Caco-2 (cell line): ENCODE measurements at regions of chr12 and their contacts with region 1.

Region 1: GRCh38 chr12:6944381-6945186 is 762 bp downstream of the C12orf57 start:
- DNase-seq: peak; percentile 97
- H3K4me3 ChIP-seq: peak overlapping the region; percentile 59
- H3K4me3 Mint-ChIP-seq: peak overlapping the region; percentile 88
- H3K27ac Mint-ChIP-seq: peak overlapping the region; percentile 99
- H3K4me1 ChIP-seq: peaks cover 18% of the 10 kb centered on the region
- H3K4me1 Mint-ChIP-seq: peaks cover 40% of the 10 kb centered on the region
- H3K27me3 ChIP-seq: no peaks in the 10 kb centered on the region
- H3K27me3 Mint-ChIP-seq: peaks cover 4% of the 10 kb centered on the region
- CTCF ChIP-seq: peak; percentile 93 to 96

Region 2: DNA sequence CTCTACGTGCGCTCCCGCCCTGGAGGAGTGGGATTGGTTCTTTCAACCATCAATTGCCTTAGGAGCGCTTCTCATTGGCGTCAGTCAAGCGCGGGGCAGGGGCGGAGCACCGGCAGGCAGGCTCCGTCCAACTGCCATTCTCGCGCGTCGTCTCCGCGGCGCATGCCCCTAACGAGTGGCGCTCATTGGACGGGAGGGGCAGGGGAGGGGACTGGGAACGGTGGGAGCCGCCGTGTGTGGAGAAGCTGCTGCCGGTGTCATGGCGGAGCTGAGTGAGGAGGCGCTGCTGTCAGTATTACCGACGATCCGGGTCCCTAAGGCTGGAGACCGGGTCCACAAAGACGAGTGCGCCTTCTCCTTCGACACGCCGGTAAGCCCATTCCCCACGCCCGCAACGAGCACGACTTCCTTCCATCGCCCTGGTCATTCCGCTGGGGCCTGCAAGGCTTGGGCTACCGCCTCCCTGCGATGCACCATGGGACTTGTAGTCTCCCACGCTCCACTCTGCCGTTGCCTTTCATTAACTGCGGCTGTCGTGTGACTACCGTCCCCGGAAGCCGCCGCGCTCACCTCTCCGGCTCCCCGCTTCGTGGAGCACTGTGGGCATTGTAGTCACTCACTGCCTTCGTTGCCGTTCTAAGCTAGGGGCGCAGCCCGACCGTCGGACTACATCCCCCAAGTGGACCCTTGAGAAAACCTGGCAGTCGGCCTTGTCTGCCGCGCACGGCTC is 92.5 kb before region 1 on chr12 and contains the start of gene USP5:
- CTCF ChIA-PET with region 1: interaction called, 11 read pairs
- POLR2A ChIA-PET with region 1: interaction called, 32 read pairs
- intact Hi-C with region 1: no loop called
- DNase-seq: peak; percentile 100
- H3K4me3 ChIP-seq: peak within 1 kb of the TSS; percentile 69
- H3K4me3 Mint-ChIP-seq: peak within 1 kb of the TSS; percentile 94
- H3K27ac Mint-ChIP-seq: peak within 1 kb of the TSS; percentile 95
- H3K4me1 ChIP-seq: peaks cover 13% of the 10 kb centered on the region
- H3K4me1 Mint-ChIP-seq: peaks cover 19% of the 10 kb centered on the region
- H3K27me3 ChIP-seq: no peaks in the 10 kb centered on the region
- H3K27me3 Mint-ChIP-seq: no peaks in the 10 kb centered on the region
- CTCF ChIP-seq: no peak
- total RNA-seq, gene USP5: 226 and 230 TPM in 2 replicates

Region 3: DNA sequence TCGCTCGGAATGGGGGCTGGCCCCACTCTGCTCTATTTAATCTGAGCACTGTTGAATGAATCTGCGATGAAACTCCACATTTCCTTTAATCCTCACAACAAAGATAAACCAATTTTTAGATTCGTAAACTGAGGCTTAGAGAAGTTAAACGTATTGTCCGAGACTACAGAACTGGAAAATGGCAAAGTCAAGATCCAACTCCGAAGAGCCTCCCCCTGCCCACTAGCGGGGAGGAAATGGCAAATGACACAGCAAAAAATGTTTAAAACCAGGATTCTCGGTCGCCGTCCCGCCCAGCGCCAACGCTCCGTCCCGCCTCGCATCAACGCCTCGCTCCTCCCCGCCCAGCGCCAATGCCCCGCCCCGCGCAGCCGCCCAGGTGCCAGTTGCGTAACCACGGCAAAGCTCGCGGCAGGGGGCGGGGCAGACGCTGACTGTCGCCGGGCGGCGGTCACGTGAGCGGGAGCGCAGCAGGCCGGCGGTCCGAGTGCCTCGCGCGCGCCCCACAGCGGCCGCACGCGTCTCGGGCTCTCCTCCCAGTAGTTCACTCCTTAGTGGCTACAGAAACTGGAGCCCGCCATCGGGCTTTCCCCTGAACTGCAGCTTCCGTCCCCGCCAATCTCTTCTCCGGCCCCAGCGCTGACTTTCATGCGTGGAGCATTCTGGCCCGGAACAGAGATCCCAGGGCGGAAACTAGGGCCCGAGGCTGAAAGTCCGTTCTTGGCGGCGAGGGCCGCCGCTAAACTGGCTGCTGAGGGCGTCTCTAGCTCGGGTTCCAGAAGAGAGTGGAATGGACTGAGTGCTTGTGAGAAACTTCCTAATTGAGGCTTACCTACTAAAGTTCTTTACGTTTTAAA is 53.6 kb before region 1 on chr12:
- CTCF ChIA-PET with region 1: interaction called, 13 read pairs
- POLR2A ChIA-PET with region 1: interaction called, 20 read pairs
- intact Hi-C with region 1: no loop called
- DNase-seq: peak; percentile 98 to 100
- H3K4me3 ChIP-seq: peak overlapping the region; percentile 34
- H3K4me3 Mint-ChIP-seq: peak overlapping the region; percentile 80
- H3K27ac Mint-ChIP-seq: peak overlapping the region; percentile 96
- H3K4me1 ChIP-seq: peaks cover 37% of the 10 kb centered on the region
- H3K4me1 Mint-ChIP-seq: peaks cover 5% of the 10 kb centered on the region
- H3K27me3 ChIP-seq: no peaks in the 10 kb centered on the region
- H3K27me3 Mint-ChIP-seq: no peaks in the 10 kb centered on the region
- CTCF ChIP-seq: peak; percentile 82 to 95

Region 4: DNA sequence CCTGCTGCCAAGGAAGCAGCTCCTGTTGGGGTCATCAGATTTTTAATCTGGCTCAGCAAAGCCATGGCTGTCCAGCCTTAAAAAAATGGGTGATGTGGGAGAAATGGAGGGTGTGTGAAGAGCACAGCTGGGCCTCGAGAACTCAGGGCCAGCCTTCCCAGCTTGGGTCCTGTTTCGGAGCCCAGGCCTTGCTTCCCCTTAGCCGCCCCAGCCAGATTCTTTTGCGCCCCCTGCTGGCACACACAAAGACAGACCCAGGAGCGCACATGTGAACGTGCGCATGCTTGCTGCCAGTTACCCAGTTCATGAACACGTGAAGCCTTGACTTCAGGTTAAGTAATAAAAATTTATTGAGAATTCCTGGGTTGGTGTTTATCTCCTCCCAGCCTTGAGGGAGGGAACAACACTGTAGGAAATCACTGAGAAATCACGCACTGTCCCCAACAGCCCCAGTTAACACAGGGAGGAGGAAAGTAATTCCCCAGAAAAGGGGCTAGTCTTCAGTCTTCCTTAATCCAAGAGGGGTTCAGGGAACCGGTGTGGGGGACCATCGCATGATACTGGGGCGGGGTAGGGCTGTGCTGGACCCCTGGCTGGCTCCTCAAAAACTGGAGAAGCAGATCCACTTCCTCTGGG is 20.6 kb after region 1 on chr12:
- CTCF ChIA-PET with region 1: interaction called, 241 read pairs
- POLR2A ChIA-PET with region 1: interaction called, 237 read pairs
- intact Hi-C with region 1: loop called (anchors 1 kb)
- DNase-seq: peak; percentile 91 to 93
- H3K4me3 ChIP-seq: peak overlapping the region; percentile 64
- H3K4me3 Mint-ChIP-seq: peak overlapping the region; percentile 81
- H3K27ac Mint-ChIP-seq: peak overlapping the region; percentile 93
- H3K4me1 ChIP-seq: peaks cover 39% of the 10 kb centered on the region
- H3K4me1 Mint-ChIP-seq: peaks cover 37% of the 10 kb centered on the region
- H3K27me3 ChIP-seq: no peaks in the 10 kb centered on the region
- H3K27me3 Mint-ChIP-seq: no peaks in the 10 kb centered on the region
- CTCF ChIP-seq: peak; percentile 95 to 96

Region 5: GRCh38 chr12:7042842-7043241 is 98.3 kb after region 1 on chr12:
- CTCF ChIA-PET with region 1: interaction called, 11 read pairs
- POLR2A ChIA-PET with region 1: no interaction called
- intact Hi-C with region 1: loop called (anchors 1 kb)
- DNase-seq: peak in 1 of 2 experiments; percentile 62
- H3K4me3 ChIP-seq: no peak overlapping the region
- H3K4me3 Mint-ChIP-seq: no peak overlapping the region
- H3K27ac Mint-ChIP-seq: no peak overlapping the region
- H3K4me1 ChIP-seq: no peaks in the 10 kb centered on the region
- H3K4me1 Mint-ChIP-seq: peaks cover 7% of the 10 kb centered on the region
- H3K27me3 ChIP-seq: no peaks in the 10 kb centered on the region
- H3K27me3 Mint-ChIP-seq: no peaks in the 10 kb centered on the region
- CTCF ChIP-seq: peak; percentile 49 to 63

Region 6: GRCh38 chr12:7369274-7369729 is 424.7 kb after region 1 on chr12:
- CTCF ChIA-PET with region 1: no interaction called
- POLR2A ChIA-PET with region 1: no interaction called
- intact Hi-C with region 1: no loop called
- DNase-seq: no peak
- H3K4me3 ChIP-seq: no peak overlapping the region
- H3K4me3 Mint-ChIP-seq: no peak overlapping the region
- H3K27ac Mint-ChIP-seq: no peak overlapping the region
- H3K4me1 ChIP-seq: 0 out of 2 replicates have a peak, but pooled peaks cover 3% of the 10 kb centered on the region
- H3K4me1 Mint-ChIP-seq: no peaks in the 10 kb centered on the region
- H3K27me3 ChIP-seq: no peaks in the 10 kb centered on the region
- H3K27me3 Mint-ChIP-seq: peaks cover 5% of the 10 kb centered on the region
- CTCF ChIP-seq: no peak